Activated B cell treated with CpG ODN at 0.5 μM for 24 hours (primary cell): ENCODE measurements at regions of chr16 and their contacts with region 1.

Region 1: DNA sequence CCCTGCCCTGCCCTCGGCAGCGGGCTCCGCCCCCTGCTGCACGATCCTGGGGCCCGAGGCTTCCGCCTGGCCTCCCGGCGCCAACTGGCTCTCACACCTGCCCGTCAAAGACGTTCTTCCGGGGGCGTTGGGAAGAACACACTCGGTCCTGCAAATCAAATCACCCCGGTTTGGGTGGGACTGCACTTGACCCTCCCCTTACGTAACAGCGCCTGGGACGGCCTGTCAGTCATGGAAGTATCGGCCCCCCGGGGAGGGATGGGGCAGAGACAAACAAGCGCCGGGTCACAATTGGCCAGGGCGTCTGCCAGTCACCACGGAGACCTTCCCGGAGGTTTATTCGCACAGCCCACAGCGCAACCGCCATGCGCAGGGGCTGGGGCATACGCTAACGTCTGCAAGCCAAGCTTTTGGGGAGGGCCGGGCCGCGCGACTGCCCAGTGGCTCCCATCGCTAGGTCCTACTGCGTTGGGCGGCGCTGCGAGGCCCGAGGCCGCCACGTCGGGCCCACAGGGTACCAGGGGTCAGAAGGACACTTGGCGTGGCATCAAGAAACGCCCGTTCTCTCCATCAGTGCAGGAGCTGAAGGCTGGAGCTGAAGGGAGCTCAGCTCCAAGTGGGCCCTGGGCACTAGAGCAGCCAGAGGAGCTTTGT is 388 bp upstream of the AKTIP start:
- DNase-seq: peak; percentile 97
- ATAC-seq: peak; percentile 92
- H3K4me3 Mint-ChIP-seq: peak overlapping the region; percentile 88
- H3K27ac Mint-ChIP-seq: peak overlapping the region; percentile 90
- H3K4me1 Mint-ChIP-seq: peaks cover 30% of the 10 kb centered on the region
- H3K27me3 Mint-ChIP-seq: no peaks in the 10 kb centered on the region
- CTCF ChIP-seq: no peak

Region 2: GRCh38 chr16:52621651-52622050 is 881.7 kb before region 1 on chr16:
- CTCF ChIA-PET with region 1: no interaction called
- POLR2A ChIA-PET with region 1: no interaction called
- intact Hi-C with region 1: no loop called
- DNase-seq: no peak
- ATAC-seq: no peak
- H3K4me3 Mint-ChIP-seq: no peak overlapping the region
- H3K27ac Mint-ChIP-seq: no peak overlapping the region
- H3K4me1 Mint-ChIP-seq: no peaks in the 10 kb centered on the region
- H3K27me3 Mint-ChIP-seq: no peaks in the 10 kb centered on the region
- CTCF ChIP-seq: no peak

Region 3: GRCh38 chr16:53061701-53062159 is 441.7 kb before region 1 on chr16:
- CTCF ChIA-PET with region 1: no interaction called
- POLR2A ChIA-PET with region 1: interaction called, 3 read pairs
- intact Hi-C with region 1: loop called (anchors 2 kb)
- DNase-seq: peak; percentile 65
- ATAC-seq: peak; percentile 82
- H3K4me3 Mint-ChIP-seq: peak overlapping the region; percentile 65
- H3K27ac Mint-ChIP-seq: peak overlapping the region; percentile 82
- H3K4me1 Mint-ChIP-seq: peaks cover 88% of the 10 kb centered on the region
- H3K27me3 Mint-ChIP-seq: no peaks in the 10 kb centered on the region
- CTCF ChIP-seq: no peak

Region 4: DNA sequence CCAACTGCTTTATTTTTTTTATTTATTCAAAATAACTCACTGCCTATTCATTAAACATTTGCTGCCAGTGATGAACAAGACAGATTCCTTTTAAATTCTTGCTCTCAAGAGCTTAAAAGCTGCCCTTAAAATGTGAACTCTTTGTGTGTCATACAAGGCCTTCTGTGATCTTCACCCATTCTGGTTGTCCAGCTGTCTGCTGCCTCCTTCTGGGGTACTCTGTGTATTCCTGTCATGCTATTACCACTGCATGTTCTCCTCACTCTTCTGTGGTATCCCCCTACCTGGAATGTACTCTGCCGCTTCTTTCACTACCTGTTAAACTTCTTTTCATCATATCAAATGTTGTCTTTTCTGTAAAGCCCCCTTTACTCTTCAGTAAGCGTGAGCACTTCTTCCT is 282.8 kb before region 1 on chr16:
- CTCF ChIA-PET with region 1: no interaction called
- POLR2A ChIA-PET with region 1: no interaction called
- intact Hi-C with region 1: loop called (anchors 5 kb)
- DNase-seq: no peak
- ATAC-seq: peak; percentile 60
- H3K4me3 Mint-ChIP-seq: no peak overlapping the region
- H3K27ac Mint-ChIP-seq: no peak overlapping the region
- H3K4me1 Mint-ChIP-seq: peaks cover 14% of the 10 kb centered on the region
- H3K27me3 Mint-ChIP-seq: no peaks in the 10 kb centered on the region
- CTCF ChIP-seq: no peak

Region 5: DNA sequence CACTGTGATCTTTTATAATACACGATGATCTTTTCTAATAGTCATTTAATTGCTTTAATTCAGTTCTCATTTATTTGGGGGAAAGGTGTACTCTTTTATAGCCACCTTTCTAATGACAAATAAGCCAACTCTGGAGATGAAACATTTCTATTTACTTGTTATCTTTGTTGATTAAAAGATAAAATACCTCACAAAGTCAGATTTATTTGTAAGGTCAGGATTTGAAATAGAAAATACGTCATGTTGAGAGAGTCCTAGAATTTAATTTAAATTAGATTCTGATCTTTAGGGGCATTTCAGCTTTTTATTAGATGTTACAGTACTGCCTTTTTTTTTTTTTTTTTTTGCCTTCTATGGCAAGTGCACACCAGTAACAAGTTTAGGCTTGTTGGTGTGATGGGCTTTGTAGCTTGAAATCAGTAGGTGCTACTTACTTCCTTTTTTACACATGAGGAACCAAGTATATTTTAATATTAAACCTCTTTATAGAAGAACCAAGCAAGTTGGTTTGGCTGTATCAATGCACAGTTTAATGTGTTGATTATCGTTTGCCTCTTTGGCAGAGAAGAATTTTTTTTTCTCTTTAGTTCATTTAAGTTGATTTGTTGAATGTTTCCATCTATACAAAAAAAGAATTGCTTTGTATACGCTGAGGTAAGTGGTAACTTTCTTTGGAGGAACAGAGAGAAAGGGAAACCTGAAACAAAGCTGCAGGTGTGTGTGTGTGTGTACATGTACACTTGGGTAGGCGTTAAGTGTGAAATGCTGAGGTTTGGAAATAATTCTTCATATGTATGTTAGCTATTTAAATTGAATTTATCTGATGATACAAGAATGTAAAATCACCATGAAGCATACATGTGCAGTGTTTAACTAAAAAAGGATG is 53.5 kb before region 1 on chr16:
- CTCF ChIA-PET with region 1: no interaction called
- POLR2A ChIA-PET with region 1: interaction called, 7 read pairs
- intact Hi-C with region 1: loop called (anchors 2 kb)
- DNase-seq: no peak
- ATAC-seq: peak; percentile 74
- H3K4me3 Mint-ChIP-seq: peak overlapping the region; percentile 32
- H3K27ac Mint-ChIP-seq: peak overlapping the region; percentile 68
- H3K4me1 Mint-ChIP-seq: peaks cover 14% of the 10 kb centered on the region
- H3K27me3 Mint-ChIP-seq: no peaks in the 10 kb centered on the region
- CTCF ChIP-seq: no peak

Region 6: GRCh38 chr16:53703590-53704444 is 200.4 kb after region 1 on chr16 and contains the starts of genes FTO and RPGRIP1L:
- CTCF ChIA-PET with region 1: no interaction called
- POLR2A ChIA-PET with region 1: interaction called, 14 read pairs
- intact Hi-C with region 1: loop called (anchors 1 kb)
- DNase-seq: peak; percentile 91
- ATAC-seq: peak; percentile 96
- H3K4me3 Mint-ChIP-seq: peak within 1 kb of the TSS; percentile 96
- H3K27ac Mint-ChIP-seq: peak within 1 kb of the TSS; percentile 90
- H3K4me1 Mint-ChIP-seq: peaks cover 27% of the 10 kb centered on the region
- H3K27me3 Mint-ChIP-seq: no peaks in the 10 kb centered on the region
- CTCF ChIP-seq: no peak
- total RNA-seq, gene FTO: 59.7 and 65.8 TPM in 2 replicates
- total RNA-seq, gene RPGRIP1L: 5.0 and 5.8 TPM in 2 replicates